Activated CD4-positive, alpha-beta T cell treated with anti-CD3 and anti-CD28 coated beads, Interleukin-2, amount 10 ng/mL, durations not matched to agents 24 days and 14 days (primary cell): ENCODE measurements at regions of chr9 and their contacts with region 1.

Region 1: GRCh38 chr9:5437254-5438216 is at the start of gene PLGRKT:
- DNase-seq: peak; percentile 97
- H3K4me3 Mint-ChIP-seq: peak within 1 kb of the TSS; percentile 93
- H3K27ac Mint-ChIP-seq: peak within 1 kb of the TSS; percentile 97
- H3K4me1 Mint-ChIP-seq: peaks cover 52% of the 10 kb centered on the region
- H3K27me3 Mint-ChIP-seq: no peaks in the 10 kb centered on the region
- total RNA-seq, gene PLGRKT: 53.0 and 54.4 TPM in 2 replicates

Region 2: GRCh38 chr9:4855841-4856240 is 581.7 kb before region 1 on chr9:
- intact Hi-C with region 1: no loop called
- DNase-seq: no peak
- H3K4me3 Mint-ChIP-seq: no peak overlapping the region
- H3K27ac Mint-ChIP-seq: no peak overlapping the region
- H3K4me1 Mint-ChIP-seq: peaks cover 23% of the 10 kb centered on the region
- H3K27me3 Mint-ChIP-seq: no peaks in the 10 kb centered on the region

Region 3: GRCh38 chr9:4939118-4939561 is 498.4 kb before region 1 on chr9:
- intact Hi-C with region 1: loop called (anchors 5 kb)
- DNase-seq: peak; percentile 83
- H3K4me3 Mint-ChIP-seq: peak overlapping the region; percentile 40
- H3K27ac Mint-ChIP-seq: peak overlapping the region; percentile 92
- H3K4me1 Mint-ChIP-seq: peaks cover 67% of the 10 kb centered on the region
- H3K27me3 Mint-ChIP-seq: no peaks in the 10 kb centered on the region

Region 4: DNA sequence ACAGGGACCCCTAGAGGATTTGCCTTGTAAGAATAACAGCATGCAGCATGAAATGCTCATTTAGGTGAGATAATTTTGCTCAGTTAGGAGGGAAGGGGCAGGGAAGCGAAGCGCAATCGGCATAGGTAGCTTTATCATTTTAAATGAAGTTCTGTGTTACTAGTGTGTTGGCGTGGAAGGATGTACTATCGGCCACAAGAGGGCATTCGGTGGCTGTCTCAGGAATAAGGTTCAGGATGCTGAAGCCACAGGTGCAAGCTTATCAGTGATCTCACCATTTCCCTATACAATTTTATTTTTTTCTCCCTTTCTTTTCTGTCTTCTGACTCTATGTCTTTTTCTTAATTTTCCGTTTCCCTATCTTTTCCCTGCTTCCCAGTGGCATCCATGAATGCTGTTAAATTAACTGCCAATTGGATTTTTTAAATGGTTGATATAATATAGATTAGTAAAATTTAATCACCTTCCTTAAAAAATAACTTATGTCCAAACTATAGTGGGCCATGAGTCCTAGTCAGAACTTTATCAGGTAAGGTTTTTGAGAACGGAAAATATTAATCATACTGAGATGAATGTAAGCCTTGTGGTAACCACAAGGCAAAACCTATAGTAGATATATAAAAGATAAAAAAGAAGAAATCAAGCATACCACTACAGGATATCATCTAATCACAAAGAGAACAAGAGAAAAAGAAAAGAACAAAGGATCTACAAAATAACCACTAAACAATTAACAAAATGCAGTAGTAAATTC is 250.9 kb before region 1 on chr9:
- intact Hi-C with region 1: loop called (anchors 1 kb)
- DNase-seq: peak; percentile 87
- H3K4me3 Mint-ChIP-seq: no peak overlapping the region
- H3K27ac Mint-ChIP-seq: no peak overlapping the region
- H3K4me1 Mint-ChIP-seq: peaks cover 17% of the 10 kb centered on the region
- H3K27me3 Mint-ChIP-seq: peaks cover 1% of the 10 kb centered on the region

Region 5: DNA sequence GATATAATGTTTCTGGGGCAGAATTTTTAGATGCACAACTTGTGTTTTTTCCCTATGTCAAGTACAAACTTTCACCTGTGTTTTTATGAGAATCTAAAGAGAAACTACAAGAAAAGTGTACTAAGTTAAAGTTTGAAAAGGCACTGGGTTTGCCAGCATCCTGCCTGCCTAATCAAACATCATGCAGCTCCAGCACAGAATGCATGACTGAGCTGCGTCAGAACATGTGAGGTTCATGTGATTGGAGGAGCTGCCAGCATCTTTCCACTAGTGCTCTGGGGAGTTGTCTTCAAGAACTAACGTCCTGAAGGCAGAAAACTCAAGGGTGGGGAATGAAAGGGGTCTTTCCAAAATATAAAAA is 145.3 kb after region 1 on chr9:
- intact Hi-C with region 1: loop called (anchors 1 kb)
- DNase-seq: peak; percentile 88
- H3K4me3 Mint-ChIP-seq: peak overlapping the region; percentile 40
- H3K27ac Mint-ChIP-seq: peak overlapping the region; percentile 92
- H3K4me1 Mint-ChIP-seq: peaks cover 69% of the 10 kb centered on the region
- H3K27me3 Mint-ChIP-seq: no peaks in the 10 kb centered on the region